ENCODE measurements at regions of chr14 and their contacts with region 1.

Region 1: DNA sequence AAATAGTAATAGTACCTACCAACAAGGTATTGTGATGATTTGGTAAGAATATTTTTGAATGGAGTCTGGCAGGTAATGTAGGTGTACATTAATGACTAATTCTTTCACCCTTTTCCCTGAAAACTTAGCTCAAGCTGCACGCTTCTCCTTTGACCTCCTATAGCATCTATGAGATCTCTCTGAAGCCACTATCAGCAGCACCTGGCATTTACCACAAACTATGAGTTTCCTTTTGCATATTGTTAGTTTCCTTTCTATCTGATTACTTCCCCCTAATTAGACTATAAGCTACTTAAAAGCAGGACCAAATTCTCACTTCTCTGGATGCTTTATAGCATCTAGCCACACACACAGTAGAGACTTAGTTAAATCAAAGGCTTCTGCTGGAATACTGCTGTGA is 48.1 kb downstream of the SLC8A3 start:
- DNase-seq: no peak
- H3K4me3 ChIP-seq: no peak overlapping the region
- H3K4me3 Mint-ChIP-seq: no peak overlapping the region
- H3K27ac Mint-ChIP-seq: no peak overlapping the region
- H3K4me1 ChIP-seq: no peaks in the 10 kb centered on the region
- H3K4me1 Mint-ChIP-seq: no peaks in the 10 kb centered on the region
- H3K27me3 ChIP-seq: peaks cover 1% of the 10 kb centered on the region; the same call in 1 of the 2 replicates
- H3K27me3 Mint-ChIP-seq: peaks cover 17% of the 10 kb centered on the region
- CTCF ChIP-seq: no peak

Region 2: DNA sequence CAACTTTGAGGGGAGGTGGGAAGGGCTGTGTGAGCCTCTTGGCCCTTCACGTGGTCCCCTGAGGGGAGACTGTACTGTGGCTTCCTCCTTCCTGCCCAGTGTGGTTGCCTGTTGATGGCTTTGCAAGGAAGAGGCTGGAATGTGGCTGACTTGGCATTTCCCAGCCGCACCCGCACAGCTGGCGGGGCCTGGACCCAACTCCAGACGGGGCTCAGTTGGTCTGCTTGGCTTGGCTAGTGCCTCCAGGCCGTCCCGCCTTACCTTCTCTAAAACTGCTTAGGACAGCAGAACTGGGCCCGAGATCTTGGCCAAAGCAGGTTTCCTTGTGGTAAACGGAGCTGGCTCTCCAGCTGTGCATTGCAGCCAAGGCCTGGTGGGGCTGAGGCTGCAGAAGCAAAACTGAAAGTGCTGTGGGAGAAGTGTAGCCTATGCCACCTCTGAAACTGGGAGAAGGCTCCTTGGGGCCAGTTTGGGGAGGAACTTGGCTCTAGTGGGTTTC is 121.9 kb before region 1 on chr14:
- CTCF ChIA-PET with region 1: no interaction called
- POLR2A ChIA-PET with region 1: no interaction called
- intact Hi-C with region 1: no loop called
- DNase-seq: no peak
- H3K4me3 ChIP-seq: no peak overlapping the region
- H3K4me3 Mint-ChIP-seq: no peak overlapping the region
- H3K27ac Mint-ChIP-seq: no peak overlapping the region
- H3K4me1 ChIP-seq: no peaks in the 10 kb centered on the region
- H3K4me1 Mint-ChIP-seq: no peaks in the 10 kb centered on the region
- H3K27me3 ChIP-seq: no peaks in the 10 kb centered on the region
- H3K27me3 Mint-ChIP-seq: no peaks in the 10 kb centered on the region
- CTCF ChIP-seq: no peak

Region 3: GRCh38 chr14:70127186-70127585 is 13.4 kb before region 1 on chr14:
- CTCF ChIA-PET with region 1: interaction called, 3 read pairs
- POLR2A ChIA-PET with region 1: no interaction called
- intact Hi-C with region 1: loop called (anchors 2 kb)
- DNase-seq: no peak
- H3K4me3 ChIP-seq: no peak overlapping the region
- H3K4me3 Mint-ChIP-seq: no peak overlapping the region
- H3K27ac Mint-ChIP-seq: no peak overlapping the region
- H3K4me1 ChIP-seq: no peaks in the 10 kb centered on the region
- H3K4me1 Mint-ChIP-seq: no peaks in the 10 kb centered on the region
- H3K27me3 ChIP-seq: no peaks in the 10 kb centered on the region
- H3K27me3 Mint-ChIP-seq: peaks cover 24% of the 10 kb centered on the region
- CTCF ChIP-seq: no peak

Region 4: DNA sequence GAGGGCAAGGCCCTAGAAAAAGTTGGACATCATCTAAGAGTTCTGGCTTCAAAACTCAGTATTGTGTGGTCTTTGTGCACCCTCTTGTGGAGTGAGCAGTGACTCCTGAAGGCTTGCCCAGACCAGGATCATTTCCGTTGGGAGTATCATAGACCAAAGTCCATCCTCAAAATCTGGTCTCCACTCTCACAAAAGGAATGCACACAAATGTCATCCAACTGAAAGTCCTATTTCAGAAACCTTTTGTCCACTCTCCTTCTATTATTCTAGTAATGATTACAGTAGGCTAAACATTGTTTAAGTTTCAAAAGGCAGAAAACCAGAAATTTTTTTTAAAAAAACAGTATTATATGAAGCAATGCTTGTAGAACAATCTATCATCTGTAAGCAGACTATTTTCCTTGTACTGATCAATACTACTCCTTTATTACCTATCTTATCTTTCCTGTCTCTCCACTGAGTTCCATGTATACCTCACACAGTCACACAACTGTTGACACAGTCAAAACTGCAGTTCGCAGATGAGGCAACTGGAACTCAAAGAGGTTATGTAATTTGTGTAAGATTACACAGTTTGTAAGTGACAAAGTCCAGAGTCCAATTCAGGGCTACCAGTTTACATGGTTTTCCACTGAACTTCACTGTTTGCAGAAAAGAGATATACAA is 177.5 kb after region 1 on chr14:
- CTCF ChIA-PET with region 1: no interaction called
- POLR2A ChIA-PET with region 1: no interaction called
- intact Hi-C with region 1: no loop called
- DNase-seq: peak; percentile 83 to 86
- H3K4me3 ChIP-seq: no peak overlapping the region
- H3K4me3 Mint-ChIP-seq: no peak overlapping the region
- H3K27ac Mint-ChIP-seq: peak overlapping the region; percentile 87
- H3K4me1 ChIP-seq: peaks cover 33% of the 10 kb centered on the region
- H3K4me1 Mint-ChIP-seq: peaks cover 18% of the 10 kb centered on the region
- H3K27me3 ChIP-seq: no peaks in the 10 kb centered on the region
- H3K27me3 Mint-ChIP-seq: no peaks in the 10 kb centered on the region
- CTCF ChIP-seq: peak; percentile 58 to 77

Region 5: GRCh38 chr14:70442750-70443149 is 302.1 kb after region 1 on chr14:
- CTCF ChIA-PET with region 1: no interaction called
- POLR2A ChIA-PET with region 1: no interaction called
- intact Hi-C with region 1: no loop called
- DNase-seq: no peak
- H3K4me3 ChIP-seq: no peak overlapping the region
- H3K4me3 Mint-ChIP-seq: no peak overlapping the region
- H3K27ac Mint-ChIP-seq: no peak overlapping the region
- H3K4me1 ChIP-seq: no peaks in the 10 kb centered on the region
- H3K4me1 Mint-ChIP-seq: no peaks in the 10 kb centered on the region
- H3K27me3 ChIP-seq: no peaks in the 10 kb centered on the region
- H3K27me3 Mint-ChIP-seq: no peaks in the 10 kb centered on the region
- CTCF ChIP-seq: no peak